Dorsolateral prefrontal cortex (tissue), 120 donors: ENCODE measurements at regions of chr14 and their contacts with region 1.

Region 1: DNA sequence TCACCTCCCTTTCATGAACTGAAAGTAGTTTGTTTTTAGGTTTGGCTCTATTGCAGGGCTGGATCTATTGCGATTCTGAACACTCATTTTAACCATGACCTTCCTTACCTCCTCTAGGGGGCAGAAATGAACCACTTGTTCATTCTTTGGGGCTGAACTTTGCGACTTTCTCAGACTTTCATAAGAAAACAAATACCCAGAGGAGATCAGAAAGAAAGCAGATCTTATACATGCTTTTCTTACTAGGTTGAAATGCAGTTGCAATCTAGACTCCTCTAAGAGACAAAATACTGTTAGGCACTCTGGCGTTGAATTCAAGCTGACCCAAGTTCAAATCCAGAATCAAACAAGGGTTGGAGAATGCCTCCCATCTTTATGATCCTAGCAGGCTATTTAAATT is 32.6 kb upstream of the PLEKHG3 start:
- DNase-seq: peak in 1 of 10 donors; percentile 23
- H3K4me3 ChIP-seq: no peak overlapping the region
- H3K27ac ChIP-seq: peak overlapping the region in 26 of 59 donors; percentile 6 to 69 (median 42)
- H3K27me3 ChIP-seq: no peaks in the 10 kb centered on the region
- CTCF ChIP-seq: peak; percentile 48 to 93 (median 78)

Region 2: DNA sequence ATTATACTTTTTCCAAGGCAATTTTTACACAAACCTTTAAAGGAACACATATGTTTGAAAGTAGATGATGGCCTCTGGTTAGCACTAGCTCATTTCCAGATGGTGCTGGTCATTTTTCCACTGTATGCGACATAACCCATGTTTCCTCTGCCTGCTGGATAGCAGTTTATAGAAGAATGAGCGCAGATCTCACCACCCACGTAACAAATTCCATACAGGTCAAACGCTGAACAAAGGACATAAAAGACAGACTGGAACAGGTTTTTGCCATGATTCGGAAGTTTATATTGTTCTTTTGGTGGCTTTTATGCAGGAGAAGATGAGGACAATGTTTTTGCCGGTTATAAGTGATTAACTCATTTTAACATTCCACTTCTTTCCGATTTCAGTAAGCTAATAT is 91.1 kb before region 1 on chr14:
- intact Hi-C with region 1: no loop called
- DNase-seq: no peak
- H3K4me3 ChIP-seq: no peak overlapping the region
- H3K27ac ChIP-seq: no peak overlapping the region
- H3K27me3 ChIP-seq: no peaks in the 10 kb centered on the region
- CTCF ChIP-seq: no peak

Region 3: DNA sequence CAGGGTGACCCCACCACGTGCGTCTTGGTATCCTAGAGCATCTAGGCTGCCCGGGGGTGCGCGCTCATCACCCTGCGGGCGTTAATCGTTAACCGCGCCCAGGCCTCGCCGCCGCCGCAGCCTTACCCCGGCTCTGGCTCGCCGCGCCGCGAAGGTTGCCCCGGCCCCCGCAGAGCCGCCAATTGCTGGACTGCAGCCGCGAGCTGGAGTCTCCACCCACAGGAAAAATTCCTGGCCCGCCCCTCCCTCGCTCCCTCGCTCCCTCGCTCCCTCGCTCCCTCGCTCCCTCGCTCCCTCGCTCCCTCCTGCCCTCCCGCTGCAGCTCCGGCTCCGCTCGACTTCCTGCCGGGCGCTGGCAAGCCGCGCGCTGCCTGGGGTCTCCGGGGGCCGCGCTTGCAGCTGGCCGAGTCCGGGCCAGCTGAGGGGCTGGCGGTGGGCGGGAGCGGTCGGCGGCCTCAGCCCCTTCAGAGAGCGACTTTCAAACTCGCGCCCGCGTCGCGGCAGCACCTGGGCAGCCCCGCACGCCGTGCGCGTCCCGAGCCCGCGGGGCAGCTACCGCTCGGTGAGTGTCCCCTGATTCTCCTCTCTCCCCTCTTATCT is 32.7 kb after region 1 on chr14 and contains the start of gene PLEKHG3:
- intact Hi-C with region 1: loop called in 1 of 2 experiments (anchors 5 kb)
- DNase-seq: peak; percentile 67 to 90 (median 80)
- H3K4me3 ChIP-seq: peak within 1 kb of the TSS; percentile 45 to 96 (median 85)
- H3K27ac ChIP-seq: peak within 1 kb of the TSS; percentile 84 to 99 (median 96)
- H3K27me3 ChIP-seq: no peaks in the 10 kb centered on the region
- CTCF ChIP-seq: peak in 41 of 56 donors; percentile 5 to 52 (median 23)
- total RNA-seq, gene PLEKHG3: 27.1 to 361 (median 85.0) TPM

Region 4: GRCh38 chr14:64715628-64716412 is 44.2 kb after region 1 on chr14:
- intact Hi-C with region 1: loop called in 1 of 2 experiments (anchors 5 kb)
- DNase-seq: peak in 7 of 10 donors; percentile 35 to 73 (median 62)
- H3K4me3 ChIP-seq: peak overlapping the region; percentile 29 to 73 (median 55)
- H3K27ac ChIP-seq: peak overlapping the region; percentile 60 to 99 (median 93)
- H3K27me3 ChIP-seq: no peaks in the 10 kb centered on the region
- CTCF ChIP-seq: peak in 2 of 56 donors; percentile 16 to 19

Region 5: DNA sequence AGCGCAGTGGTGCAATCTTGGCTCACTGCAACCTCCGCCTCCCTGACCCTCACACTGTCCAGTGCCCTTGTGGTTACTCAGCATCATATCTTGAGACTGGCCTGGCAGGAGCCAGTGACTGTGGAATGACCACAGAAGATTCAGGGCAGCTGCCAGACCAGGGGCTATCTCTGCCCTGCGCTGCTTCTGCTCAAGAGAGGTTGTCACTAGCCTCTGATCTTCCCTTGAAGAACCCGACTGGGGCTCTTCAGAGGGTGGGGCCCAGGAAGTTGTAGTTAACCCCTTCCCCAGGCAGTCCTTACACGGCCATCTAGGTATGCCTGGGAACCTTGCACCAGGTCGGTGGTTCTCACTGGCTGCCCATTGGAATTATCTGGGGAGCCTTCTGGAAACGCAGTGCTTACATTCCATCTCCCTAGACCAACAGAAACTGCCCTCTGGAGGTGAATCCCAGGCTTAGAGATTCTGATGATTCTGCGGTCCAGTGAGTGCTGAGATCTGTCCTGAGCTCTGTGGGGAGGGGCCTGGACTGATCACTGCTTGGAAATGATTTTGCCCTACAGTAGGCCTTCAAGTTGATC is 74.0 kb after region 1 on chr14:
- intact Hi-C with region 1: loop called (anchors 5 kb)
- DNase-seq: no peak
- H3K4me3 ChIP-seq: no peak overlapping the region
- H3K27ac ChIP-seq: peak overlapping the region in 57 of 59 donors; percentile 32 to 93 (median 78)
- H3K27me3 ChIP-seq: no peaks in the 10 kb centered on the region
- CTCF ChIP-seq: peak in 44 of 56 donors; percentile 13 to 62 (median 42)

Region 6: GRCh38 chr14:64764641-64765520 is 93.3 kb after region 1 on chr14:
- intact Hi-C with region 1: loop called (anchors 1 to 2 kb)
- DNase-seq: peak; percentile 51 to 86 (median 67)
- H3K4me3 ChIP-seq: peak overlapping the region in 58 of 59 donors; percentile 8 to 66 (median 44)
- H3K27ac ChIP-seq: peak overlapping the region in 54 of 59 donors; percentile 34 to 93 (median 82)
- H3K27me3 ChIP-seq: no peaks in the 10 kb centered on the region
- CTCF ChIP-seq: peak; percentile 65 to 97 (median 89)